ENCODE measurements at regions of chr3 and their contacts with region 1.

Region 1: GRCh38 chr3:97793420-97794019 is 28.3 kb upstream of the CRYBG3 start:
- DNase-seq: peak; percentile 65
- H3K4me3 ChIP-seq: no peak overlapping the region
- H3K27ac ChIP-seq: no peak overlapping the region
- H3K4me1 ChIP-seq: no peaks in the 10 kb centered on the region
- H3K27me3 ChIP-seq: no peaks in the 10 kb centered on the region
- CTCF ChIP-seq: peak; percentile 53 to 64
- POLR2A ChIP-seq: no peak

Region 2: GRCh38 chr3:97575742-97576141 is 217.8 kb before region 1 on chr3:
- CTCF ChIA-PET with region 1: no interaction called
- POLR2A ChIA-PET with region 1: no interaction called
- dilution Hi-C with region 1: no loop called
- intact Hi-C with region 1: no loop called
- DNase-seq: no peak
- H3K4me3 ChIP-seq: no peak overlapping the region
- H3K27ac ChIP-seq: no peak overlapping the region
- H3K4me1 ChIP-seq: no peaks in the 10 kb centered on the region
- H3K27me3 ChIP-seq: no peaks in the 10 kb centered on the region
- CTCF ChIP-seq: no peak
- POLR2A ChIP-seq: no peak

Region 3: DNA sequence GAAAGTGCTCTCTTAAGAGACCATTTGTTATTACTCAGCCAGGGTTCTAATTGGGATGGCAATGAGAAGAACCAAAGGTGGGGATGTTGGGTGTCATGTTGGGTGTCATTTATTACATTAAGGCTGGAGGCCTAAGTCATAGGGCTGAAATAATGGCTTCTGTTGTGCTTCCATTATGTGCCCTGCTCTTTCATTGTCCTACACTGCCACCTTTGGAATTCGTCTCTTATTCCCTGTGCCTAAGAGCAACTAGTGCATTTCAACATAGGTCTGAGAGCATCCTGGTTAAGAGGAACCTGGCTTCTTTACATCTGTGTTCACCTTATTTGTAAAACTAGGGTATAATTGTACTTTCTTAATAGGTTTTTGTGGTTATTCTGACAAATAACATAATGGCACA is 146.5 kb after region 1 on chr3:
- CTCF ChIA-PET with region 1: no interaction called
- POLR2A ChIA-PET with region 1: no interaction called
- dilution Hi-C with region 1: no loop called
- intact Hi-C with region 1: loop called (anchors 1 kb)
- DNase-seq: peak; percentile 26
- H3K4me3 ChIP-seq: no peak overlapping the region
- H3K27ac ChIP-seq: no peak overlapping the region
- H3K4me1 ChIP-seq: no peaks in the 10 kb centered on the region
- H3K27me3 ChIP-seq: no peaks in the 10 kb centered on the region
- CTCF ChIP-seq: no peak
- POLR2A ChIP-seq: no peak